Gastrocnemius medialis (tissue), 4 donors: ENCODE measurements at regions of chrX and their contacts with region 1.

Region 1: GRCh38 chrX:73943693-73944562 is 360.1 kb upstream of the ZCCHC13 start:
- DNase-seq: peak; percentile 64 to 80
- ATAC-seq: peak; percentile 96 to 98
- H3K4me3 ChIP-seq: peak overlapping the region; percentile 67 to 85 (median 70)
- H3K27ac ChIP-seq: peak overlapping the region; percentile 78 to 91 (median 84)
- H3K4me1 ChIP-seq: peaks cover 0 to 27% of the 10 kb centered on the region in 2 donors
- H3K27me3 ChIP-seq: no peaks in the 10 kb centered on the region
- CTCF ChIP-seq: no peak
- POLR2A ChIP-seq: peak; percentile 49 to 67

Region 2: GRCh38 chrX:73831500-73831899 is 112.4 kb before region 1 on chrX:
- in situ Hi-C with region 1: no loop called
- intact Hi-C with region 1: no loop called
- DNase-seq: no peak
- ATAC-seq: no peak
- H3K4me3 ChIP-seq: no peak overlapping the region
- H3K27ac ChIP-seq: no peak overlapping the region
- H3K4me1 ChIP-seq: peaks cover 0 to 31% of the 10 kb centered on the region in 2 donors
- H3K27me3 ChIP-seq: no peaks in the 10 kb centered on the region
- CTCF ChIP-seq: no peak
- POLR2A ChIP-seq: no peak

Region 3: GRCh38 chrX:73963682-73964081 is 19.8 kb after region 1 on chrX:
- in situ Hi-C with region 1: no loop called
- intact Hi-C with region 1: loop called (anchors 1 kb)
- DNase-seq: peak; percentile 49 to 81
- ATAC-seq: peak; percentile 92 to 95
- H3K4me3 ChIP-seq: no peak overlapping the region
- H3K27ac ChIP-seq: peak overlapping the region; percentile 76 to 86 (median 80)
- H3K4me1 ChIP-seq: peaks cover 0 to 37% of the 10 kb centered on the region in 2 donors
- H3K27me3 ChIP-seq: no peaks in the 10 kb centered on the region
- CTCF ChIP-seq: no peak
- POLR2A ChIP-seq: peak in 1 of 2 donors; percentile 15